CD8-positive, alpha-beta T cell (primary cell): ENCODE measurements at regions of chr2 and their contacts with region 1.

Region 1: GRCh38 chr2:25131567-25132298 is 36.6 kb downstream of the POMC start:
- DNase-seq: peak in 3 of 9 experiments; percentile 21 to 27 (median 25)
- ATAC-seq: peak; percentile 34
- H3K4me3 ChIP-seq: no peak overlapping the region
- H3K4me3 Mint-ChIP-seq: peak overlapping the region; percentile 77
- H3K27ac ChIP-seq: no peak overlapping the region
- H3K27ac Mint-ChIP-seq: no peak overlapping the region
- H3K4me1 ChIP-seq: no peaks in the 10 kb centered on the region
- H3K4me1 Mint-ChIP-seq: peaks cover 12% of the 10 kb centered on the region
- H3K27me3 ChIP-seq: peaks cover 18 to 22% of the 10 kb centered on the region in 2 experiments
- H3K27me3 Mint-ChIP-seq: peaks cover 48% of the 10 kb centered on the region
- CTCF ChIP-seq: no peak

Region 2: GRCh38 chr2:24977631-24978030 is 154.1 kb before region 1 on chr2:
- CTCF ChIA-PET with region 1: interaction called, 38 read pairs
- POLR2A ChIA-PET with region 1: interaction called, 4 read pairs
- intact Hi-C with region 1: loop called in 1 of 2 experiments (anchors 1 kb)
- DNase-seq: no peak
- ATAC-seq: no peak
- H3K4me3 ChIP-seq: no peak overlapping the region
- H3K4me3 Mint-ChIP-seq: no peak overlapping the region
- H3K27ac ChIP-seq: no peak overlapping the region
- H3K27ac Mint-ChIP-seq: no peak overlapping the region
- H3K4me1 ChIP-seq: peaks cover 8% of the 10 kb centered on the region
- H3K4me1 Mint-ChIP-seq: peaks cover 15% of the 10 kb centered on the region
- H3K27me3 ChIP-seq: no peaks in the 10 kb centered on the region
- H3K27me3 Mint-ChIP-seq: no peaks in the 10 kb centered on the region
- CTCF ChIP-seq: no peak

Region 3: GRCh38 chr2:25197336-25198208 is 65.8 kb after region 1 on chr2:
- CTCF ChIA-PET with region 1: interaction called, 13 read pairs
- POLR2A ChIA-PET with region 1: no interaction called
- intact Hi-C with region 1: loop called in 1 of 2 experiments (anchors 5 kb)
- DNase-seq: no peak
- ATAC-seq: no peak
- H3K4me3 ChIP-seq: no peak overlapping the region
- H3K4me3 Mint-ChIP-seq: no peak overlapping the region
- H3K27ac ChIP-seq: no peak overlapping the region
- H3K27ac Mint-ChIP-seq: no peak overlapping the region
- H3K4me1 ChIP-seq: peaks cover 12% of the 10 kb centered on the region
- H3K4me1 Mint-ChIP-seq: peaks cover 14% of the 10 kb centered on the region
- H3K27me3 ChIP-seq: no peaks in the 10 kb centered on the region
- H3K27me3 Mint-ChIP-seq: no peaks in the 10 kb centered on the region
- CTCF ChIP-seq: no peak

Region 4: GRCh38 chr2:25402477-25402876 is 270.7 kb after region 1 on chr2:
- CTCF ChIA-PET with region 1: no interaction called
- POLR2A ChIA-PET with region 1: no interaction called
- intact Hi-C with region 1: no loop called
- DNase-seq: peak in 1 of 9 experiments; percentile 25
- ATAC-seq: no peak
- H3K4me3 ChIP-seq: no peak overlapping the region
- H3K4me3 Mint-ChIP-seq: no peak overlapping the region
- H3K27ac ChIP-seq: no peak overlapping the region
- H3K27ac Mint-ChIP-seq: peak overlapping the region; percentile 3
- H3K4me1 ChIP-seq: peaks cover 11% of the 10 kb centered on the region
- H3K4me1 Mint-ChIP-seq: peaks cover 21% of the 10 kb centered on the region
- H3K27me3 ChIP-seq: no peaks in the 10 kb centered on the region
- H3K27me3 Mint-ChIP-seq: no peaks in the 10 kb centered on the region
- CTCF ChIP-seq: no peak